HepG2 (cell line): ENCODE measurements at regions of chr14 and their contacts with region 1.

Region 1: DNA sequence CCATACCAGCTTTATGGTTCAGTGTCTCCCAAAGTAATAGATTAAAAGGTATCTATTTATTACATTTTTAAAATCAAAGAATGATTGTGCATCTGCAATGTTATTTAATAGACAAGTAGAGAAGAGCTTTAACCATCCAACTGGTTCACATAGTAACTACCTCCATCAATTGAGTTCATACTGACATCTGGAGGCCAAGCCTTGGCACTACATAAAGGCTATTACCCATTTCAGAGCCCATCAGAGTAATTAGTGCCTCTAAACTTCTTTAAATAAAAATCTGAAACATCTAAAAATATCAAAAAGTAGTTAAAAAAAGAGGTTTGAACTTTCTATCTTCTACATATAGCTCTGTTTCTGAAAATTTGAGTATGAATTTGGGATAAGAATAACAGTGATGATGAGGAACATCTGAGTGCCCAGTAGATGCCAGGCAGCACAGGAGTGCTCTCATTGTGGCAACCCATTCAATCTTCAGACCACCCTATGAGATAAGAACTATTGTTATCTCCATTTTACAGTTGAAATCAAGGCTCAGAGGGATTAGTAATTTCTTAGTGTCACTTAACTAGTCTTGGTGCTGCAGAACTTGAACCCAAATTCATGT is 132.9 kb upstream of the DAAM1 start:
- DNase-seq: peak; percentile 21
- ATAC-seq: peak; percentile 75
- H3K4me3 ChIP-seq: no peak overlapping the region
- H3K27ac ChIP-seq: no peak overlapping the region
- H3K4me1 ChIP-seq: no peaks in the 10 kb centered on the region
- H3K27me3 ChIP-seq: no peaks in the 10 kb centered on the region
- CTCF ChIP-seq: peak; percentile 67
- EP300 ChIP-seq: no peak
- POLR2A ChIP-seq: no peak
- RAD21 ChIP-seq: no peak

Region 2: GRCh38 chr14:59028476-59029202 is 26.9 kb before region 1 on chr14:
- CTCF ChIA-PET with region 1: interaction called, 9 read pairs
- POLR2A ChIA-PET with region 1: no interaction called
- in situ Hi-C with region 1: no loop called
- intact Hi-C with region 1: loop called (anchors 1 kb)
- DNase-seq: peak; percentile 39
- ATAC-seq: peak; percentile 97
- H3K4me3 ChIP-seq: no peak overlapping the region
- H3K27ac ChIP-seq: no peak overlapping the region
- H3K4me1 ChIP-seq: no peaks in the 10 kb centered on the region
- H3K27me3 ChIP-seq: no peaks in the 10 kb centered on the region
- CTCF ChIP-seq: peak; percentile 85
- EP300 ChIP-seq: no peak
- POLR2A ChIP-seq: no peak
- RAD21 ChIP-seq: peak; percentile 66

Region 3: DNA sequence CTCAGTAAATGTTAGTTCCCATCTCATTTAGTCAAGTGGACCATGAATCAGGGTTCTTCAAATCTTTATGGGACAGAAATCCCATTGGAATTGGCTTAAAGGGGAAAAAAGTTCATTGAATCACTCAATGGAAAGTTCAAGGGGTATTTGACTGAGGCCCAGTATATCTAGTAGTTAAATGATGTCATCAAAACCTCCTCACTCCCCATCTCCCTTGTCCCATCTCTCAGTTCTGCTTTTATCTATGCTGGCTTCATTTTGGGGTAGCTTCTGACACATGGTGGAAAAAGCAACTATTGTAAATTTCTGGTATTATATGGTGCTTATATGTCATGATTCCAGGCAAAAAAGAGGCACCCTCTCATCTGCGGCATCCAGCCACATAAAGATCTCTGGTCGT is 184.8 kb after region 1 on chr14:
- CTCF ChIA-PET with region 1: no interaction called
- POLR2A ChIA-PET with region 1: no interaction called
- in situ Hi-C with region 1: no loop called
- intact Hi-C with region 1: no loop called
- DNase-seq: no peak
- ATAC-seq: no peak
- H3K4me3 ChIP-seq: no peak overlapping the region
- H3K27ac ChIP-seq: no peak overlapping the region
- H3K4me1 ChIP-seq: peaks cover 28% of the 10 kb centered on the region
- H3K27me3 ChIP-seq: no peaks in the 10 kb centered on the region
- CTCF ChIP-seq: no peak
- EP300 ChIP-seq: no peak
- POLR2A ChIP-seq: no peak
- RAD21 ChIP-seq: no peak